ENCODE measurements at regions of chr17 and their contacts with region 1.

Region 1: DNA sequence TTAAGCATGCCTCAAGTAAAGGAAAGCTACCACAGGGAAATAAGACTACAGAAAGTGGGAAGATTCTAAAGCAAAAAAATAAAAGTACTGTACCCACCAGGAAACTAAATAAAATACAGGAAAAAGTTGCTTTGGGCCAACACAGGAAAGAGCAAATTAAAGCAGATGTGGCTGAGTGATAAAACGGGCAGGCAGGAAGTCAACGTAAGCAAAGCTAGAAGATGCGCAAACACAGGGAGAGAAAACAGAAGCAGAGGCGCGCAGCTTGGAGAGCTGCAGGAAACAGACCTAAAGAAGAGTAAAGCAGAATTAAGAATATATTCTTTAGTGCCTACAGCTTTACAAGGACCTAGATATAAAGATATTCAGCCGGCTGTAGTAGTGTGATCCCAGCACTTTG is 21.7 kb downstream of the USP36 start:
- ATAC-seq: no peak
- H3K4me3 ChIP-seq: no peak overlapping the region
- H3K27ac ChIP-seq: no peak overlapping the region
- H3K4me1 ChIP-seq: no peaks in the 10 kb centered on the region

Region 2: DNA sequence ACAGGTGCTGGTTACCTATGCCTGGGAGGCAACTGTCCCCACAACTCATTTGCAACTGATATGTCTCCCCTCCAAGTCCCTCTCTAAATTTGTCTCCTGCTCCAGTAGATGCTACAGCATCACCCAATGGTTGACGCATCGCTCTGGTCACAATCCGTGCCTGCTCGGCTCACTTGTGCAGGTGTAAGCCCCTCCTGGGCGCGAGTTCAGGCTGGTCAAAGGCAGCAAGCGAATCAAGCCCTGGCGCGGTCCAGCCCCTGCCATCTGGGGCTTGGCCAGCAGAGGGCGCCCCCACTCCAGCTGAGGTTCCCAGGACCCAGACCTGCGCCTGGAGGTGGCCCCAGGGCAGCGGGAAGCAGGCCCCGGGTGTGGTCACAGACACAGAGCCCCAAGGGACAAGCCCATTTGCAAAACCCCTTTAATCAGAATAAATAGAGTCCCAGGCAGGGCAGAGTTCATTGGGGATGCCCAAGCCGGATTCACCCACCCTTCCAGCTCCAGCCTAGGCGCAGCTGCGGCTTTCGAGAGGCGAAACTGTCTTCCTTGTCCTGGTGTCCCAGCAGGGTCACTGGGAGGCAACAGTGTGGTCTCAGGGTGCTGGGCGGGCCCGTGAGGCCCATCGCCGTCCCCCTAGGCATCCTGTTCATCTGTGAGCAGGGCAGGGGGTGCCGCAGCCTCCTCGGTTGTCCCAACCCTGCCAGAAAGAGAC is 706.3 kb before region 1 on chr17:
- in situ Hi-C with region 1: loop called in 1 of 9 experiments (anchors 10 kb)
- ATAC-seq: peak; percentile 77 to 86 (median 82)
- H3K4me3 ChIP-seq: no peak overlapping the region
- H3K27ac ChIP-seq: no peak overlapping the region
- H3K4me1 ChIP-seq: peaks cover 0 to 3% of the 10 kb centered on the region in 2 donors

Measured in motor neuron (in vitro differentiated cells).